ENCODE measurements at regions of chr16 and their contacts with region 1.

Region 1: DNA sequence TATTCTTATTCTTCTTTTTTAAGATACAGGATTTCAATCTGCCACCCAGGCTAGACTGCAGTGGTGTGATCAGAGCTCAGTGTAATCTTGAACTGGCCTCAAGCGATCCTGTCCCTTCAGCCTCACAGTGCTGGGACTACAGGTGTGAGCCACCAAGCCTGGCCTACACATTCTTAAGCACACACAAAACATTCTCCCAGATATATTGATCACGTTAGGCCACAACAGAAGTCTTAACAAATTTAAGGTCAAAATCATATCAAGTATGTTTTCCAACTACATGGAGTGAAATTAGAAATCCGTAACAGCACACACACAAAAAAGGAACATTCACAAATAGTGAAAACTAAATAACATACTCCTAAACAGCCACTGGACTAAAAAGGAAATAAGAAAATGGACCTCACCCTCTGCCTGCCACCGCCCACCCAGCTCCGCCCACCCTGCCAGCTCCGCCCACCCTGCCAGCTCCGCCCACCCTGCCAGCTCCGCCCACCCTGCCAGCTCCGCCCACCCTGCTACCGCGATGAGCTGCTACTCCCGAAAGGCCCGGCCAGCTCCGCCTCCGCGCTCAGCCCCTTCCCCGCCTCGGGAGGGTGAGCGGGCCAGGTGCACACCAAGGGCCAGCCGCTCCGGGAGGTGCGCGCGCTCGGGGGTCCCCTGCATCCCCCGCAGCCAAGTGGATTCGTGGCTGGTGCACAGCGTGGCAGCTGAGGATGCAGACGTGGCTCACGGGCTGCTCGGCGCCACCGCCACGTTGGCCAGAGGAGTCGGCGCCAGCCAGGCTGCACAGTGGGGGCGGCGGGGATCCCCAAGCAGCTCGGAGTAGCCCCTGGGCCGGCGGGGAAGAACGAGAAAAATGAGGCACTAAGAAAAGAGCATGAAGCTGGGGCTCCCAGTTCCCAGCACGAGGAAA is 41.2 kb downstream of the C16orf87 start:
- DNase-seq: no peak
- H3K4me3 ChIP-seq: peak overlapping the region; percentile 54 to 76 (median 63)
- H3K27ac ChIP-seq: peak overlapping the region; percentile 20
- H3K4me1 ChIP-seq: peaks cover 10% of the 10 kb centered on the region
- H3K27me3 ChIP-seq: no peaks in the 10 kb centered on the region
- CTCF ChIP-seq: no peak

Region 2: GRCh38 chr16:46701615-46702014 is 88.1 kb before region 1 on chr16:
- dilution Hi-C with region 1: no loop called
- DNase-seq: no peak
- H3K4me3 ChIP-seq: no peak overlapping the region
- H3K27ac ChIP-seq: no peak overlapping the region
- H3K4me1 ChIP-seq: peaks cover 6% of the 10 kb centered on the region
- H3K27me3 ChIP-seq: no peaks in the 10 kb centered on the region
- CTCF ChIP-seq: no peak

Region 3: DNA sequence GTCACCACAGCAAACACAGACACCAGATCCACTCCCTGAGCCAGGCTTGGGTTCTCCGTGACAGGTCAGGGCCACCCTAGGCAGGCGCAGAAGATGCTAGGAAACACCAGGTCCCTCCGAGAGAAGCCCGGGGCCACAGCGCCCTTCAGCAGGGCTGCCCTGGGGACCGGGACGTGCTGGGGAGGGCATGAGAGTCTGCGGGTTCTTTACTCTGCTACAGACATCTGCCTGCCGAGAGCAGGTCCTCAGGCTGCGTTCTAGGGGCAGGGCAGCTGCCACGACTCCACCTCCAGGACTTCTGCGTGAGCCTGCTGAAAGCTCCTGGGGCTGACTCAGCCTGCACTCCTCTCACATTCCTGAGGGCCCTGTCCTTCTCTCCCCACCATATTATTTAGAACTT is 53.1 kb before region 1 on chr16:
- dilution Hi-C with region 1: loop called (anchors 5 kb)
- DNase-seq: no peak
- H3K4me3 ChIP-seq: no peak overlapping the region
- H3K27ac ChIP-seq: no peak overlapping the region
- H3K4me1 ChIP-seq: no peaks in the 10 kb centered on the region
- H3K27me3 ChIP-seq: no peaks in the 10 kb centered on the region
- CTCF ChIP-seq: no peak